ENCODE measurements at regions of chr2 and their contacts with region 1.

Region 1: GRCh38 chr2:19863303-19864041 is 38.3 kb downstream of the TTC32 start:
- DNase-seq: peak; percentile 45
- ATAC-seq: peak; percentile 76
- H3K4me3 ChIP-seq: no peak overlapping the region
- H3K27ac ChIP-seq: no peak overlapping the region
- H3K4me1 ChIP-seq: peaks cover 14% of the 10 kb centered on the region
- H3K27me3 ChIP-seq: peaks cover 3% of the 10 kb centered on the region
- CTCF ChIP-seq: peak; percentile 83
- POLR2A ChIP-seq: no peak
- RAD21 ChIP-seq: peak; percentile 98

Region 2: DNA sequence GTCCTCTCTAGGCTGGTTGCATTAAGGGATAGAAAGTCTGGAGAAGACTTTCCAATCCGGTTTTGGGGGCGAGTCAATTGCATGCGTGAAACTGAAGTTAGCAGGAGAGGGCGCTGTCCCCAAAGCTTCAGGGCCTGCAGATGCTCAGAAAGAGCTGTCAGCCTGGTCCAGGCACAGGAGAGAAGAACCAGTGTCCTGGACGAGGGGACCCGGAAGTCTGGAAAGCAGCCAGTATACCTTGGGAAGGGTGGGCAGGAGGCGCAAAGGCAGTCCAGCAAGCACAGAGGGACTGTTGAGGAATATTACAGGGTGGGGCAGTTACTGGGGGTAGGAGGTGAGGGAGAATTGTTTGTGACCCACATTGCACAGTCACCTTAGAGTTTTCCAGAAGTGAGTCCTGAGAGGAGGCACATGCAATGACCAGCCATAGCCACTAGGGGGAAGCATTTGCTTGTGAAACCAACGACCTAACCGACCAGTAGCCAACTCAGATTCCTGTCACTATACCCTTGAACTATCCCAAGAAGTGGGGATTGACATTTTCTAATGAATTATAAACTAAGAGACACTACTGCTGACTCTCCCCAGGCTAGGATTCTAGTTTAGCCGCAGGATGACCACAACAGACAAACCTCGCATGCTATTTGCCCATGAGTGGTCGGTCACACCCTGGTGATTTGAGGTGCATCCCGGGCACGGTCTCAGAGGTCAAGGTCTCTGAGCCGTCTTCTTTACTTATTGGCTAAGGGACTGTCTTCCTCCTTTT is 1475.8 kb before region 1 on chr2:
- CTCF ChIA-PET with region 1: no interaction called
- POLR2A ChIA-PET with region 1: no interaction called
- dilution Hi-C with region 1: no loop called
- in situ Hi-C with region 1: no loop called
- intact Hi-C with region 1: loop called (anchors 2 kb)
- DNase-seq: peak; percentile 79
- ATAC-seq: peak; percentile 99
- H3K4me3 ChIP-seq: no peak overlapping the region
- H3K27ac ChIP-seq: no peak overlapping the region
- H3K4me1 ChIP-seq: no peaks in the 10 kb centered on the region
- H3K27me3 ChIP-seq: no peaks in the 10 kb centered on the region
- CTCF ChIP-seq: peak; percentile 94
- POLR2A ChIP-seq: no peak
- RAD21 ChIP-seq: peak; percentile 96

Region 3: DNA sequence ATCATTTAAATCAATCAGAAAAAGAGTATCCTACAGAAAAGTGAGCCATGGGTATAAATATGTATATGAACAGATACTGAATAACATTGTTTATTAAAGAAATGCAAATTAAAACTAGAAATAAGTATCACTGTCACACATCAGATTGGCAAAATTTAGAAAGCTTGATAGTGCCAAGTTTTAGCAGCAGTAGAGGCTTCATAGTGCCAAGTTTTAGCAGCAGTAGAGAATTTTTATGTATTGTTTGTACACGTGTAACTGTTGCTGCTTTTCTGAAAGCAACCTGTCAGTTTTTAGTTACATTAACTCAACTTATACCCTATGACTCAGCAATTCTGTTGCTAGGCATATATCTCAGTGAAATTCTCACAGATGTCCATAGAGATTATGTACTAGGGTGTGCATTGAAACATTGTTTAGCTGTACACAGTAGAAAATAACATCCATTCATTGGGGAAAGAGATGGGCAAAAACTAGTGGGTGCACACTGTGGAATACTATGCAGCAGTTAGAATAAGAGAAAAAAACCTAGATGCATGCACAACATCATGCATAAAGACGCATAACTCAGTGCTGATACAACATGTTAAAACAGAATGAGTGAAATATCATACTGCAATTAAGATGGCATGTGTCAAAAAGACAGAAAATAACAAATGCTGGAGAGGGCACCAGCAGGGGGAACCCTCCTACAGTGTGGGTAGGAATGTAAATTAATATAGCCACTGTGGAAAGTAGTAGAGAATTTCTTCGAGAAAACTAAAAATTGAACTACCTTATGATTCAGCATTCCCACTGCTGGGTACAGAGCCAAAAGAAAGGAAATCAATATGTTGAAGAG is 979.6 kb before region 1 on chr2:
- CTCF ChIA-PET with region 1: no interaction called
- POLR2A ChIA-PET with region 1: no interaction called
- dilution Hi-C with region 1: no loop called
- in situ Hi-C with region 1: no loop called
- intact Hi-C with region 1: loop called (anchors 10 kb)
- DNase-seq: peak; percentile 62
- ATAC-seq: peak; percentile 44
- H3K4me3 ChIP-seq: no peak overlapping the region
- H3K27ac ChIP-seq: no peak overlapping the region
- H3K4me1 ChIP-seq: peaks cover 5% of the 10 kb centered on the region
- H3K27me3 ChIP-seq: no peaks in the 10 kb centered on the region
- CTCF ChIP-seq: peak; percentile 54
- POLR2A ChIP-seq: no peak
- RAD21 ChIP-seq: peak; percentile 63

Region 4: GRCh38 chr2:19682493-19682892 is 181.0 kb before region 1 on chr2:
- CTCF ChIA-PET with region 1: interaction called, 8 read pairs
- POLR2A ChIA-PET with region 1: no interaction called
- dilution Hi-C with region 1: no loop called
- in situ Hi-C with region 1: loop called (anchors 10 kb)
- intact Hi-C with region 1: loop called (anchors 1 kb)
- DNase-seq: peak; percentile 31
- ATAC-seq: no peak
- H3K4me3 ChIP-seq: no peak overlapping the region
- H3K27ac ChIP-seq: no peak overlapping the region
- H3K4me1 ChIP-seq: peaks cover 2% of the 10 kb centered on the region; the same call in 1 of the 2 replicates
- H3K27me3 ChIP-seq: peaks cover 17% of the 10 kb centered on the region
- CTCF ChIP-seq: no peak
- POLR2A ChIP-seq: no peak
- RAD21 ChIP-seq: no peak

Region 5: DNA sequence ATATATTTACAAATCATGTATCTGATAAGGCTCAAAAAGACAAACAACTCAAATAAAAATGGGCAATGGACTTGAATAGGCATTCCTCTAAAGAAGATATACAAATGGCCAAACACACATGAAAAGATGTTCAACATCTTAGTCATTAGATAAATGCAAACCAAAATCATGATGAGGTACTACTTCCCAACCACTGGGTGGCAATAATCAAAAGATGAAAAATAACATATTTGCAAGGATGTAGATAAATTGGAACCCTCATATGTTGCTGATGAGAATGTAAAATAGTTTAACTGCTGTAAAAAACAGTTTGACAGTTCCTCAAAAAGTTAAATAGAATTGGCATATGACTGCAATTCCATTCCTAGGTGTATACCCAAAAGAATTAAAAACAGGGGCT is 94.0 kb before region 1 on chr2:
- CTCF ChIA-PET with region 1: no interaction called
- POLR2A ChIA-PET with region 1: no interaction called
- dilution Hi-C with region 1: no loop called
- in situ Hi-C with region 1: no loop called
- intact Hi-C with region 1: loop called (anchors 1 kb)
- DNase-seq: peak; percentile 20
- ATAC-seq: no peak
- H3K4me3 ChIP-seq: no peak overlapping the region
- H3K27ac ChIP-seq: no peak overlapping the region
- H3K4me1 ChIP-seq: peaks cover 16% of the 10 kb centered on the region
- H3K27me3 ChIP-seq: no peaks in the 10 kb centered on the region
- CTCF ChIP-seq: peak; percentile 28; the same call in 1 of the 2 replicates
- POLR2A ChIP-seq: no peak
- RAD21 ChIP-seq: peak; percentile 24; the same call in 1 of the 2 replicates

Region 6: DNA sequence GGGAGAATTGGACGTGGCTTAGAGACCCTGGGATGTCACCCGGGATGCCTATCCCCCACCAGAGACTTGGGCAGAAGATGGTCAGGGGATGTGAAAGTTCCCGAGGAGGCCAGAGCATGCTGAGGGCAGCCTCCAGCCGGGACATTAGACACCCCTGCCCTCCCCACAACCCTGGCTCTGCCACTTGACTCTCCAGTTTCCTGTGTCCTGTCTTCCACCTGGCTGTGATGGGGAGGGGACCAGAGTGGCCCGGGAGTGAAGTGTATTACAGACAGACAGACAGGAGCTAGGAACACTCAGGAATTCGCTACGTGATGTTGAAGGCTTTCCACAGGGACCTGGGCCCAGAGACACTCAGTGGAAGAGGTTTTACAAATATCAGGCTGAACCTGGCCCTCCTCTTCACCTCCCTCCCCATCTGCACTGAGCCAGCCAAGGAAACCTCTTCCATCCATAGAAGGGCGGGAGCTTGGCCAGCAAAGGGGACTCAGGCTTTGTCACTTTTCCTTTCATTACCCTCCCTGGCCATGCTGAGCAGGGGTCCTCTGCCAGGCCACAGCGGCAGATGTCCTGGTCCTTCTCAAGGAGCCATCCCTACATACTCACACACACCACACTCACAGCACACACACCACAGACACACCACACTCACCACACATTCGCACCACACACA is 300.7 kb after region 1 on chr2:
- CTCF ChIA-PET with region 1: no interaction called
- POLR2A ChIA-PET with region 1: no interaction called
- dilution Hi-C with region 1: no loop called
- in situ Hi-C with region 1: no loop called
- intact Hi-C with region 1: no loop called
- DNase-seq: no peak
- ATAC-seq: no peak
- H3K4me3 ChIP-seq: no peak overlapping the region
- H3K27ac ChIP-seq: no peak overlapping the region
- H3K4me1 ChIP-seq: peaks cover 13% of the 10 kb centered on the region
- H3K27me3 ChIP-seq: no peaks in the 10 kb centered on the region
- CTCF ChIP-seq: no peak
- POLR2A ChIP-seq: no peak
- RAD21 ChIP-seq: no peak